ENCODE measurements at regions of chr1 and their contacts with region 1.

Region 1: GRCh38 chr1:1847890-1848289 is 43.0 kb downstream of the GNB1 start:
- DNase-seq: no peak
- ATAC-seq: no peak
- H3K4me3 ChIP-seq: no peak overlapping the region
- H3K4me3 Mint-ChIP-seq: no peak overlapping the region
- H3K27ac ChIP-seq: no peak overlapping the region
- H3K27ac Mint-ChIP-seq: no peak overlapping the region
- H3K4me1 ChIP-seq: peaks cover 0 to 37% of the 10 kb centered on the region in 2 experiments
- H3K4me1 Mint-ChIP-seq: peaks cover 71 to 73% (median 73%) of the 10 kb centered on the region in 3 donors
- H3K27me3 ChIP-seq: no peaks in the 10 kb centered on the region
- H3K27me3 Mint-ChIP-seq: no peaks in the 10 kb centered on the region

Region 2: DNA sequence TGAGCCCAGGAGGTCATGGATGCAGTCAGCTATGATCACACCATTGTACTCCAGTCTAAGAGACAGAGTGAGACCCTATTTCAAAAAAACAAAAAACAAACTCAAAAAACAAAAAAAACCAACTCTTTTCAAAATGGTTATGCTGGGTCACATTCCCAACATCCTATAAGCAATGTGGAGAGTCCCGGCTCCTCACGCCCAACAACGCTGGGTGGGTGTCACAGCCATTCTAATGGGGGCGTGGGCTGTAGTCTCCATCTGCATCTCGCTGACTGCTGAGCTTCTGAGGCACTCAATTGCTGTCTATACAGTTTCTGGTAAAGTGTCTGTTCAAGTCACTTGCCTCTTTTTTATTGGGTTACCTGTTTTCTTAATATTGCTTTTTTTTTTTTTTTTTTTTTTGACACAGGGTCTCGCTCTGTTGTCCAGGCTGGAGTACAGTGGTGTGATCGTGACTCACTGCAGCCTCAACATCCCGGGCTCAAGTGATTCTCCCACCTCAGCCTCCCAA is 11.8 kb before region 1 on chr1:
- CTCF ChIA-PET with region 1: interaction called in 1 of 2 experiments, 3 read pairs
- POLR2A ChIA-PET with region 1: interaction called in 1 of 2 experiments, 10 read pairs
- DNase-seq: no peak
- ATAC-seq: no peak
- H3K4me3 ChIP-seq: no peak overlapping the region
- H3K4me3 Mint-ChIP-seq: no peak overlapping the region
- H3K27ac ChIP-seq: no peak overlapping the region
- H3K27ac Mint-ChIP-seq: no peak overlapping the region
- H3K4me1 ChIP-seq: peaks cover 2 to 25% of the 10 kb centered on the region in 2 experiments
- H3K4me1 Mint-ChIP-seq: peaks cover 32 to 48% (median 47%) of the 10 kb centered on the region in 3 donors
- H3K27me3 ChIP-seq: no peaks in the 10 kb centered on the region
- H3K27me3 Mint-ChIP-seq: no peaks in the 10 kb centered on the region

Region 3: DNA sequence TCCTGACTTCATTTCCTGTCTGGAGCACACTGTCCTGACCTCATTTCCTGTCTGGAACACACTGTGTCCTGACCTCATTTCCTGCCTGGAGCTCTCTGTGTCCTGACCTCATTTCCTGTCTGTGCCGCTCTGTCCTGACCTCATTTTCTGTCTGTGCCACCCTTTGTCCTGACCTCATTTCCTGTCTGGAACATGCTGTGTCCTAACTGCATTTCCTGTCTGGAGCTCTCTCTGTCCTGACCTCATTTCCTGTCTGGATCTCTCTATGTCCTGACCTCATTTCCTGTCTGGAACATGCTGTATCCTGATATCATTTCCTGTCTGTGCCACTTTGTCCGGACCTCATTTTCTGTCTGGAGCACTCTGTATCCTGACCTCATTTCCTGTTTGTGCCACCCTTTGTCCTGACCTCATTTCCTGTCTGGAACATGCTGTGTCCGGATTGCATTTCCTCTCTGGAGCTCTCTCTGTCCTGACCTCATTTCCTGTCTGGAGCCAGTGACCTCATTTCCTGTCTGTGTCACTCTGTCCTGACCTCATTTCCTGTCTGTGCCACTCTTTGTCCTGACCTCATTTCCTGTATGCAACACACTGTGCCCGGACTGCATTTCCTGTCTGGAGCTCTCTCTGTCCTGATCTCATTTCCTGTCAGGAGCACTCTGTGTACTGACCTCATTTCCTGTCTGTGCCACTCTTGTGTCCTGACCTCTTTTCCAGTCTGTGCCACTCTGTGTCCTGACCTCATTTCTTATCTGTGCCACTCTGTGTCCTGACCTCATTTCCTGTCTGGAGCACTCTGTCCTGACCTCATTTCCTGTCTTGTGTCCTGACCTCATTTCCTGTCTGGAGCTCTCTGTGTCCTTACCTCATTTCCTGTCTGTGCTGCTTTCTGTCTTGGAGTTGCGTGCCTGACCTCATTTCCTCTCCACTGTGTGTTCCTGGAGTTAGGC is 407.8 kb after region 1 on chr1:
- CTCF ChIA-PET with region 1: no interaction called
- POLR2A ChIA-PET with region 1: no interaction called
- DNase-seq: peak; percentile 45 to 97 (median 87)
- ATAC-seq: peak; percentile 66 to 73 (median 66)
- H3K4me3 ChIP-seq: no peak overlapping the region
- H3K4me3 Mint-ChIP-seq: no peak overlapping the region
- H3K27ac ChIP-seq: peak overlapping the region; percentile 99
- H3K27ac Mint-ChIP-seq: no peak overlapping the region
- H3K4me1 ChIP-seq: peaks cover 29 to 93% of the 10 kb centered on the region in 2 experiments
- H3K4me1 Mint-ChIP-seq: peaks cover 56 to 60% (median 60%) of the 10 kb centered on the region in 3 donors
- H3K27me3 ChIP-seq: no peaks in the 10 kb centered on the region
- H3K27me3 Mint-ChIP-seq: no peaks in the 10 kb centered on the region